GM12878 (cell line): ENCODE measurements at regions of chr7 and their contacts with region 1.

Region 1: DNA sequence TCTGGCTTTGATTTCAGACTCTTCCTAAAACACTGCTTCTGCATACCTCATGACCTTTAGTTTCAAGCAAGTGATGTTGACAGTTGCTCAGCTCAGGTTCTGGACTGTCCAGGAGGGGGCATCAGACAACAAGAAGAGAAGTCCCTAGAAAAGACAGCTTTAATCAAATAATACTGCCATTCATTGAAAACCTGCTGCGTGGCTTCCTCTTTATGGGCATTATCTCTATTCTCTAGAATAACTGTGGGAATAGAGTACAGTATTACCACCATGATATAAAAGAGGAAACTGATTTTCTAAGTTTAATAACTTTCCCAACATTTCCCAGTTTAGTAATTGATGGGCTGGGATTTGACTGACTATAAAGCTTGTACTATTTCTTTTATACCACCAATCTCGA is 170.4 kb downstream of the SNX13 start:
- DNase-seq: no peak
- ATAC-seq: peak; percentile 85
- H3K4me3 ChIP-seq: no peak overlapping the region
- H3K27ac ChIP-seq: no peak overlapping the region
- H3K4me1 ChIP-seq: 0 out of 2 replicates have a peak, but pooled peaks cover 3% of the 10 kb centered on the region
- H3K27me3 ChIP-seq: no peaks in the 10 kb centered on the region
- CTCF ChIP-seq: peak; percentile 73 to 86 (median 74)
- EP300 ChIP-seq: no peak
- POLR2A ChIP-seq: no peak
- RAD21 ChIP-seq: peak; percentile 99

Region 2: GRCh38 chr7:17706734-17707133 is 63.2 kb before region 1 on chr7:
- CTCF ChIA-PET with region 1: interaction called, 20 read pairs
- POLR2A ChIA-PET with region 1: no interaction called
- RAD21 ChIA-PET with region 1: interaction called, 18 read pairs
- SMC1A ChIA-PET with region 1: interaction called, 8 read pairs
- in situ Hi-C with region 1: no loop called
- intact Hi-C with region 1: loop called (anchors 2 kb)
- DNase-seq: peak; percentile 12
- ATAC-seq: peak; percentile 93
- H3K4me3 ChIP-seq: no peak overlapping the region
- H3K27ac ChIP-seq: no peak overlapping the region
- H3K4me1 ChIP-seq: no peaks in the 10 kb centered on the region
- H3K27me3 ChIP-seq: no peaks in the 10 kb centered on the region
- CTCF ChIP-seq: peak; percentile 64 to 74 (median 68)
- EP300 ChIP-seq: no peak
- POLR2A ChIP-seq: no peak
- RAD21 ChIP-seq: peak; percentile 94

Region 3: GRCh38 chr7:17792075-17792936 is 22.4 kb after region 1 on chr7:
- CTCF ChIA-PET with region 1: interaction called, 13 read pairs
- POLR2A ChIA-PET with region 1: no interaction called
- RAD21 ChIA-PET with region 1: interaction called, 4 read pairs
- SMC1A ChIA-PET with region 1: interaction called, 14 read pairs
- in situ Hi-C with region 1: no loop called
- intact Hi-C with region 1: no loop called
- DNase-seq: no peak
- ATAC-seq: no peak
- H3K4me3 ChIP-seq: no peak overlapping the region
- H3K27ac ChIP-seq: no peak overlapping the region
- H3K4me1 ChIP-seq: no peaks in the 10 kb centered on the region
- H3K27me3 ChIP-seq: no peaks in the 10 kb centered on the region
- CTCF ChIP-seq: no peak
- EP300 ChIP-seq: no peak
- POLR2A ChIP-seq: no peak
- RAD21 ChIP-seq: no peak

Region 4: DNA sequence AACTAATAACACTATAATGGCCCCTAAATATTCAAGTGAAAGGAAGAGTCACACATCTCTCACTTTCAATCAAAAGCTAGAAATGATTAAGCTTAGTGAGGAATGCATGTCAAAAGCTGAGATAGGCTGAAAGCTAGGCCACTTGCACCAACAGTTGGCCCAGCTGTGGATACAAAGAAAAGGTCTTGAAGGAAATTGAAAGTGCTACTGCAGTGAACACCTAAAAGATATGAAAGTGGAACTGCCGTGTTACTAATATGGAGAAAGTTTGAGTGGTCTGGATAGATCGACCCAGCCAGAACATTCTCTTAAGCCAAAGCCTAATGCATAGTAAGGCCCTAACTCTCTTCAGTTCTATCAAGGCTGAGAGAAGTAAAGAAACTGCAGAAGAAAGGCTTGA is 182.5 kb after region 1 on chr7:
- CTCF ChIA-PET with region 1: interaction called, 10 read pairs
- POLR2A ChIA-PET with region 1: no interaction called
- RAD21 ChIA-PET with region 1: interaction called, 8 read pairs
- SMC1A ChIA-PET with region 1: interaction called, 13 read pairs
- in situ Hi-C with region 1: no loop called
- intact Hi-C with region 1: no loop called
- DNase-seq: peak; percentile 62
- ATAC-seq: peak; percentile 99
- H3K4me3 ChIP-seq: no peak overlapping the region
- H3K27ac ChIP-seq: no peak overlapping the region
- H3K4me1 ChIP-seq: peaks cover 11% of the 10 kb centered on the region; the same call in 1 of the 2 replicates
- H3K27me3 ChIP-seq: peaks cover 0 to 13% of the 10 kb centered on the region in 2 experiments; a peak in 3 of 4 replicates
- CTCF ChIP-seq: no peak
- EP300 ChIP-seq: no peak
- POLR2A ChIP-seq: no peak
- RAD21 ChIP-seq: no peak

Region 5: GRCh38 chr7:18004372-18004771 is 234.5 kb after region 1 on chr7:
- CTCF ChIA-PET with region 1: interaction called, 10 read pairs
- POLR2A ChIA-PET with region 1: no interaction called
- RAD21 ChIA-PET with region 1: no interaction called
- SMC1A ChIA-PET with region 1: interaction called, 3 read pairs
- in situ Hi-C with region 1: no loop called
- intact Hi-C with region 1: no loop called
- DNase-seq: no peak
- ATAC-seq: no peak
- H3K4me3 ChIP-seq: no peak overlapping the region
- H3K27ac ChIP-seq: no peak overlapping the region
- H3K4me1 ChIP-seq: no peaks in the 10 kb centered on the region
- H3K27me3 ChIP-seq: no peaks in the 10 kb centered on the region
- CTCF ChIP-seq: no peak
- EP300 ChIP-seq: no peak
- POLR2A ChIP-seq: no peak
- RAD21 ChIP-seq: no peak

Region 6: GRCh38 chr7:18320971-18321567 is 551.2 kb after region 1 on chr7:
- CTCF ChIA-PET with region 1: interaction called, 35 read pairs
- POLR2A ChIA-PET with region 1: no interaction called
- RAD21 ChIA-PET with region 1: interaction called, 7 read pairs
- SMC1A ChIA-PET with region 1: interaction called, 14 read pairs
- in situ Hi-C with region 1: loop called (anchors 10 kb)
- intact Hi-C with region 1: loop called (anchors 2 kb)
- DNase-seq: no peak
- ATAC-seq: peak; percentile 91
- H3K4me3 ChIP-seq: no peak overlapping the region
- H3K27ac ChIP-seq: no peak overlapping the region
- H3K4me1 ChIP-seq: no peaks in the 10 kb centered on the region
- H3K27me3 ChIP-seq: no peaks in the 10 kb centered on the region; a peak in 1 of 4 replicates
- CTCF ChIP-seq: peak; percentile 44 to 60 (median 58); a peak in 5 of 6 replicates
- EP300 ChIP-seq: no peak
- POLR2A ChIP-seq: no peak
- RAD21 ChIP-seq: peak; percentile 66